ENCODE measurements at regions of chr12 and their contacts with region 1.

Region 1: GRCh38 chr12:25829192-25829591 is 129.3 kb upstream of the RASSF8 start:
- DNase-seq: peak; percentile 97
- H3K4me3 ChIP-seq: no peak overlapping the region
- H3K27ac ChIP-seq: peak overlapping the region; percentile 80
- H3K4me1 ChIP-seq: peaks cover 15% of the 10 kb centered on the region
- H3K27me3 ChIP-seq: no peaks in the 10 kb centered on the region
- CTCF ChIP-seq: no peak
- POLR2A ChIP-seq: no peak

Region 2: DNA sequence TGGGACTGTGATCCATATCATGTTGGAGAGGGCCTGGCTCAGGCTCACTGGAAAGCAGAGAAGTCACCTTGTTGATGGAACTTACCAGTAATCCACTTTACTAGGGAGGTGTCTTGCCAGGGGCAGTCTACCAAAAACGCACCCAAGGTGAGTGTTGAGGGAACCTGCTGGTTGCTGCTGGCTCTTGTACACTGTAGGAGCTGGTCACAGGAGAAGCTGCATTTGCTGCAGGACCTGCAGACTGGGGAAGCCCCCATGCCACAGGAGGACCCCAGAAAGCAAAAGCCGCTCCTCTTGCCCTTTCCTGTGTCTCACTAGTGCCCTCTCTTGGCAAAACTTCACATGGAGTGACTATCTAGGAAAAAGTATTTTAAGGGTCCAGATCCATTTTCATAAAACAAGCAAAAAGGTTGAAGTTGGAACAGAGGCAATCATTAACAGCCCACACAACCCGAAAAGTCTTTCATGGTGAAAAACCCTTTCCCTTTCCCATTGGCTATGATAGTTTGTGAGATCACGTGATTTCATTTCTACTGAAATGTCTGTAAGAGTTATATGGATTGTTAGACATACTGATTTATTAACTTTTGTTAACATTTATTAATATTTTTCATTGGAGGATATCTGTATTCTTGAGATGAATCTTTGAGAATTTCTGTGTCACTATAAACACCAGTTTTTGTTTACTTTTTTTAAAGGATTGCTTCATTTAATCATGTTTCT is 188.5 kb after region 1 on chr12:
- CTCF ChIA-PET with region 1: no interaction called
- POLR2A ChIA-PET with region 1: no interaction called
- dilution Hi-C with region 1: no loop called
- intact Hi-C with region 1: loop called (anchors 10 kb)
- DNase-seq: peak; percentile 69
- H3K4me3 ChIP-seq: no peak overlapping the region
- H3K27ac ChIP-seq: no peak overlapping the region
- H3K4me1 ChIP-seq: peaks cover 7% of the 10 kb centered on the region
- H3K27me3 ChIP-seq: no peaks in the 10 kb centered on the region
- CTCF ChIP-seq: peak; percentile 67
- POLR2A ChIP-seq: no peak